Left ventricle myocardium superior (tissue), 1 donor: ENCODE measurements at regions of chr3 and their contacts with region 1.

Region 1: GRCh38 chr3:66372681-66373350 is 128.0 kb downstream of the LRIG1 start:
- DNase-seq: peak; percentile 76
- ATAC-seq: peak; percentile 78

Region 2: DNA sequence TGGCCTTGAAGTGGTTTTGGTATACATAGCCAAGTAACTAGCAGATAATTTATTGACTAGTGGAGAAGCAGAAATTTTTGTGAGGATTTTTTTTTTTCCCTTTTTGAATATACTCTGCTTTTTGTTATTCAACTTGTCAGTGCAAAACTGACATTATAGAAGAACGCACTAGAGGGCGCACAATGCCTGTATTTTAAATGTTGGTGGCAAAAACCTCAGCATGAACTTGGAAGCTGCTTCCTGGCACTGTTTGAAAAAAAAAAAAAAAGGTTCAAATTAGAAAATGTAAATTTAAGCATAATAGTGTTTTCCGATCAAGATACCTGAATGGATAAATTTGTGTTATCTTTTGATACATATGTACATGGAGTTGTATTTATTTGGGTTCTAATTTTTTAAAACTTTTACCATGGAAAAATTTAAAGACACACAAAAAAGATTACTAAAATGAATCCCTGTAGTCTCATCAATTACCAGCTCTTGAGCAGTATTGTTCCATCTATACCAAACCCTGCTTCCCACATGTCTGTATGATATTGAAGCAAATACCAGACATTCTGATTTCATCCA is 96.0 kb before region 1 on chr3:
- intact Hi-C with region 1: loop called (anchors 10 kb)
- DNase-seq: no peak
- ATAC-seq: peak; percentile 48